ENCODE measurements at regions of chr9 and their contacts with region 1.

Region 1: DNA sequence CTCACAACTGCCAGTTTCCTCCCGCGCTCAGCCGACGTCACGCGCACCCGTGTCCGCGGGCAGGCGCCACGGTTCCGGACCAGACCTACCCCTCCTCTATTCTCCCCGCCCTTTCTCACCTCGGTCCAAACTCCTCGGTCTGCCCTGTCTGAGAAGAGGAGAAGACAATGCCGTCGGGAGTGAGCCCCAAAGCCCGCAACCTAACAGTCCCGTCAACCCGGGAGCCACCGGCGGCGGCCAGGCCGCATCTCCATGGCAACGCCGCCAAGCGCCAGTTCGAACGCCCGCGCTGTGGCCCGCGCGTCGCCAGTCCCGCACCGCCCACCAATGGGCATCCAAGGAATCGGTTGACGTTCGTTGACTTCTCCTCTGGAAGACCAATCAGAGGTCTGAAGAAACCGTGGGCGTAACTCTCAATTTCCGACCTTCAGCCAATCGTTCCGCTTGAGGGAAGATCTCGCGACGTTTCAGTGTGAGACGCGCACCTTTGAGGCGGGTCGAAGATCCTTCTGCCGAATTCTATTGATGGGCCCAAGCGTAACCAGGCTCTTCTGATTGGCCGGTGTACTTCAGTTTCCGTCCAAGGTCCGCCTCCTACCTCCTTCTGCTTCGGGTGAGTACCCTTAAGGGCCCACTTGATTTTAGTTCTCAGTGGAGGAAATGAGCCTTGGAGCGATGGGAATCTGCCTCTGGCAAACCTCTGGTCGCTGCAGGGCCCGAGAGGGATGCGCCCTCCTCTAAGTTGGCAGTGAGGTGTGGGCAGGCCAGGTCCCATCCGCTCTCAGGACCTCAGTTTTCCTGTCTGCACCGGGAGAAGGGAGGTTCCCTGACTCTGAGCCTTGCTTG is at the starts of genes KIF24 and NUDT2:
- DNase-seq: peak; percentile 99
- H3K4me3 ChIP-seq: peak within 1 kb of the TSS; percentile 62 to 75 (median 64)
- H3K27ac ChIP-seq: peak within 1 kb of the TSS; percentile 92 to 94 (median 94)
- H3K4me1 ChIP-seq: peaks cover 0 to 42% (median 21%) of the 10 kb centered on the region in 4 donors
- H3K27me3 ChIP-seq: no peaks in the 10 kb centered on the region
- CTCF ChIP-seq: no peak
- EP300 ChIP-seq: no peak
- POLR2A ChIP-seq: peak; percentile 78 to 89
- total RNA-seq, gene KIF24: 0.28 to 1.4 (median 0.51) TPM
- total RNA-seq, gene NUDT2: 12.1 to 59.9 (median 36.1) TPM

Region 2: DNA sequence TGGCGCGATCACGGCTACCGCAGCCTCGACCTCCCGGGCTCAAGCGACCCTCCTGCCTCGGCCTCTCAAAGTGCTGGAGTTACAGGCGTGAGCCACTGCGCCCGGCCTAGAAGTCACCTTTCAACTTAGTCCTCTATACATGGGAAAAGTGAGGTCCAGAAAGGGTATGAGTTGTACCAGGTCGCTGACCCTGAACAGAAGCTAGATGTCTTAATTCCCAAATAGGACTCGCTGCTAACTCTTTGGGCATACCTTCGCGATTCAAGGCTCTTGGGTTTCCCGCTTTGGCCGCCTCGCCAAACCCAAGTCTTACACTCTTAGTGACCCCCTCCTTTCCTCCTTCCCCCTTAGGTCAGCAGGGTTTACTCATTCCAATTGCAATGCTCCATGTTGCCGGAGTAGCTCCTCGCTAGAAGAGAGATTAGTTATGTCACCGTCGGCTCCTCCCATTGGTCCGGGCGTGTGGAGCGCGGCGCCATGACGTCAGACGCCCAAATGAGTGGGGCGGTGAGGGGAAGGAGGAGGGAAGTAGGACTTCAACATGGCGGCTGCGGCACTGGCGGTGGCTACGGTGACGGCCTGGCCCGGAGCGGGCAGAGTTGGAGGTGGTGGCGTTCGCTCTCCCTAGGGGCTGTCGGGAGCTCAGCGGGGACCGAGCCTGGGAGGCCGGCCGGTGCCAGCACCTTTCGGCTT is 150.5 kb before region 1 on chr9 and contains the start of gene UBAP1:
- intact Hi-C with region 1: loop called (anchors 5 kb)
- DNase-seq: peak; percentile 99
- H3K4me3 ChIP-seq: peak within 1 kb of the TSS; percentile 71 to 92 (median 84)
- H3K27ac ChIP-seq: peak within 1 kb of the TSS; percentile 92 to 96 (median 94)
- H3K4me1 ChIP-seq: peaks cover 0 to 18% (median 11%) of the 10 kb centered on the region in 4 donors
- H3K27me3 ChIP-seq: no peaks in the 10 kb centered on the region
- CTCF ChIP-seq: peak in 1 of 4 experiments; percentile 11
- EP300 ChIP-seq: no peak
- POLR2A ChIP-seq: peak; percentile 81 to 82
- total RNA-seq, gene UBAP1: 42.5 to 52.7 (median 44.3) TPM

Region 3: DNA sequence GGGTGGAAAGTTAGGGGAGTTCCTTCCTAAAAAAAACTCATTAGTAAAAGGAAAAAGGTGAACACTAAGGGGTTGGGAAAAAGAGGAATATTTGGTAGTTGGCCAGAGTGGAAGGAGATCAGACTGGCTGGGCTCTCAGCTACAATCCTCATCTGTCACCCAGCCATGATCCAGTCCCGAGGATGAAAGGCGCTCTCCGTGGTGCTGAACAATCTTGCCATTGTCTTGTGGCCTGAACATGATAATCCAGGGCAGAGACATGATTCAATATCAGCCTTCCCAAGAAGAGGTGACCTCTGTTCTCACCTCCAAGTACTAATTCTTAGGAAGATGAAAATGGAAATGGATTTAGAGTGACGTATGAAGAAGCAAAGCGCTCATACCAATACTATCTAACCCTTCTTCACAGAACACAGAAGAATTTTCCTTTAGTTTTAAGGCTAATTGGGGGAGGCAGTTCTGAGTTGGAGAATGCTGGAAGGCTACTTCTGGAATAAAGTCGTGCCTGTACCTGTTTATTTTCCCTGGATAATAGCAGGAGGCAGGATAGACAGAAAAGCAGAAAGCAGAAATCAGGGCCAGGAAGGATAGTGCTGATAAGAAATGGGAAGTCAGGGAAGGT is 84.1 kb after region 1 on chr9:
- intact Hi-C with region 1: no loop called
- DNase-seq: no peak
- H3K4me3 ChIP-seq: no peak overlapping the region
- H3K27ac ChIP-seq: no peak overlapping the region
- H3K4me1 ChIP-seq: no peaks in the 10 kb centered on the region
- H3K27me3 ChIP-seq: no peaks in the 10 kb centered on the region
- CTCF ChIP-seq: no peak
- EP300 ChIP-seq: no peak
- POLR2A ChIP-seq: no peak

Region 4: GRCh38 chr9:34458013-34458958 is 129.1 kb after region 1 on chr9 and contains the starts of genes DNAI1 and FAM219A:
- intact Hi-C with region 1: loop called (anchors 5 kb)
- DNase-seq: peak; percentile 99
- H3K4me3 ChIP-seq: peak within 1 kb of the TSS; percentile 59 to 96 (median 70)
- H3K27ac ChIP-seq: peak within 1 kb of the TSS; percentile 82 to 88 (median 84)
- H3K4me1 ChIP-seq: peaks cover 0 to 36% (median 22%) of the 10 kb centered on the region in 4 donors
- H3K27me3 ChIP-seq: no peaks in the 10 kb centered on the region
- CTCF ChIP-seq: no peak
- EP300 ChIP-seq: no peak
- POLR2A ChIP-seq: peak; percentile 55 to 79
- total RNA-seq, gene DNAI1: under 0.01 TPM in 1 of 4 donors, not detected in the others
- total RNA-seq, gene FAM219A: 7.4 to 10.2 (median 8.8) TPM

Region 5: DNA sequence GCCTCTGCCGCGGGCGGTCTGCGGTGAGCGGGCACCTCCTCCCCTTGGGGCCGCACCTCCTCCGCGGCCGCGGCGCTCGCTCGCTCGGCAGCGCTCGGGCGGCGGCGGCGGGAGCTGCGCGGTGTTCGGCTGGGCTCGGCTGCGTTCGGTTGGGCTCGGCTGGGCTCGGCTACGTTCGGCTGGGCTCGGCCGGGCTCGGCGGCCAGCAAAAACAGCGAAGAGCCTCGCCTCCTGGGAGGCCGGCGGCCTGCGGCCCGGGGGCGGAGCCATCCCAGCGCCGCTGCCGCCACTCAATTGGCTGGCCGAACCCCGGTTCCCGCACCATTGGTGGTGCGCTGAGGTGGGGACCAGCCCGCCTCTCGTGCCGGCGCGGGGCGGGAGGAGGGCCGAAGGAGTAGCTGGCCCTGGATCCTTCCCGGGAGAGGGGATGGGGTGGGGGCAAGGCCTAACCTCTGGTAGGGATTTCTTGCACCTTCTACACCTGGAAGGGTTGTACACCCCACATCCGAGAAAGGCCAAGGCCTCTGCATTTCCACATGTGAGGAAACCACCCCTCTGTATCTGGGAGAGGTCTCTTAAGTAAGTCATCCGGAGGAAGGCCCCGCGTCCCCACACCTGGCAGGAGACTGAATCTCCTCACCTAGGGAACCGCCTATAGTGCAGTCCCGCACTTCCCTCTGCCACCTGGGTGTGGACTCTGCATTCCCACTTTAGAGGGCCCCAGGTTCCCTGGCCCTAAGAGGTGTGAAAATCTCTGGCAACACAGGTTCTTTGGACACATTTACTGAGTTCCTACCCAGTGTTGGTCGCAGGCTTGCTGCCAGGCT is 194.0 kb after region 1 on chr9 and contains the start of gene ENHO:
- intact Hi-C with region 1: loop called (anchors 5 kb)
- DNase-seq: peak; percentile 93
- H3K4me3 ChIP-seq: peak within 1 kb of the TSS; percentile 16 to 54 (median 50)
- H3K27ac ChIP-seq: peak within 1 kb of the TSS in 3 of 4 donors; percentile 30 to 63 (median 47)
- H3K4me1 ChIP-seq: peaks cover 0 to 13% (median 8%) of the 10 kb centered on the region in 4 donors
- H3K27me3 ChIP-seq: no peaks in the 10 kb centered on the region
- CTCF ChIP-seq: no peak
- EP300 ChIP-seq: no peak
- POLR2A ChIP-seq: no peak
- total RNA-seq, gene ENHO: 2.5 TPM in 1 of 4 donors, not detected in the others

Region 6: DNA sequence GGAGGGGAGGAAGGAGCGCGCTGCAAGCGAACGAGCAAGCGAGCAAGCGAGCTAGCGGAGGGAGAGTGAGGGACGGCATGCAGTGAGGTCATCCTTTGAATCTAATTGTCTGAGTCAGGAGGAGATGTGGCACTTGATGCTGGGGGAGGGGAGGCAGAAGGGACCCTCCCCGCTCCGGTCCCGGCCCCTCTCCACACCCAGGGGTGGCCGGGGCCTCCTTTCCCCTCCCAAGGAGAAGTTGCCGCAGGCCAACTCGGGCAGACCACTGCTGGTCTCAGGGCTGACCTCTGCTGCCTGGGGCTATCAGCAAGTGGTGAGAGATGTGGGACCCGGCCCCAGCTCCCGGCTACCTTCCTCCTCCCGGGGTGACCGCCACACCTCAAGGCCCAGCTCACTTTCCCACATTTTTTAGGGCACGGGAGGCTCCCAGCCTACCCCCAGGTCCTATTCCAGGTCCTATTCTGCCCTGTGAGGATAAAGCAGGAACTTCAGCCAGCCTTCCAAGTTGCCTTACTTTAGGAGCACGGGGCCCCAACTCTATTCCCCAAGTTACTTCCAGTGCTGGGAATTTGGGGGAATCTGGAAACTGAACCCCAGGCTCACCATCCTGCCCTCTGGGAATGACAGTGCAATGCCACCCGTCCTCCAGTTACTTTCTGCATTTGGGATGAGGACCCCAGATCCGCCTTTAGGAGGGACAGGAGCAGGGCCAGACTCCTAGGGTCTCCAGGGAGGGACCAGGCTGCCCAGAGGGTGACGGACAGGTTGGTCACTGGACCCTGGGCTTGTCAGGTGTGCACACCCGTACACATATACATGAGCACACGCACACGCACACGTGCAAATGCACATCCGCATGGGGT is 249.3 kb after region 1 on chr9:
- intact Hi-C with region 1: no loop called
- DNase-seq: no peak
- H3K4me3 ChIP-seq: peak overlapping the region in 3 of 4 donors; percentile 25 to 44 (median 43)
- H3K27ac ChIP-seq: peak overlapping the region in 2 of 4 donors; percentile 9 to 57
- H3K4me1 ChIP-seq: peaks cover 0 to 20% (median 14%) of the 10 kb centered on the region in 4 donors
- H3K27me3 ChIP-seq: peaks cover 16 to 75% (median 43%) of the 10 kb centered on the region in 3 donors
- CTCF ChIP-seq: no peak
- EP300 ChIP-seq: no peak
- POLR2A ChIP-seq: no peak